ENCODE measurements at regions of chr2 and their contacts with region 1.

Region 1: GRCh38 chr2:55050133-55050994 is at the start of gene RTN4:
- DNase-seq: peak; percentile 99
- ATAC-seq: peak; percentile 89
- H3K4me3 Mint-ChIP-seq: peak within 1 kb of the TSS; percentile 91
- H3K27ac Mint-ChIP-seq: peak within 1 kb of the TSS; percentile 96
- H3K4me1 Mint-ChIP-seq: peaks cover 56% of the 10 kb centered on the region
- H3K27me3 Mint-ChIP-seq: no peaks in the 10 kb centered on the region
- CTCF ChIP-seq: no peak
- total RNA-seq, gene RTN4: 81.5 to 85.0 TPM

Region 2: DNA sequence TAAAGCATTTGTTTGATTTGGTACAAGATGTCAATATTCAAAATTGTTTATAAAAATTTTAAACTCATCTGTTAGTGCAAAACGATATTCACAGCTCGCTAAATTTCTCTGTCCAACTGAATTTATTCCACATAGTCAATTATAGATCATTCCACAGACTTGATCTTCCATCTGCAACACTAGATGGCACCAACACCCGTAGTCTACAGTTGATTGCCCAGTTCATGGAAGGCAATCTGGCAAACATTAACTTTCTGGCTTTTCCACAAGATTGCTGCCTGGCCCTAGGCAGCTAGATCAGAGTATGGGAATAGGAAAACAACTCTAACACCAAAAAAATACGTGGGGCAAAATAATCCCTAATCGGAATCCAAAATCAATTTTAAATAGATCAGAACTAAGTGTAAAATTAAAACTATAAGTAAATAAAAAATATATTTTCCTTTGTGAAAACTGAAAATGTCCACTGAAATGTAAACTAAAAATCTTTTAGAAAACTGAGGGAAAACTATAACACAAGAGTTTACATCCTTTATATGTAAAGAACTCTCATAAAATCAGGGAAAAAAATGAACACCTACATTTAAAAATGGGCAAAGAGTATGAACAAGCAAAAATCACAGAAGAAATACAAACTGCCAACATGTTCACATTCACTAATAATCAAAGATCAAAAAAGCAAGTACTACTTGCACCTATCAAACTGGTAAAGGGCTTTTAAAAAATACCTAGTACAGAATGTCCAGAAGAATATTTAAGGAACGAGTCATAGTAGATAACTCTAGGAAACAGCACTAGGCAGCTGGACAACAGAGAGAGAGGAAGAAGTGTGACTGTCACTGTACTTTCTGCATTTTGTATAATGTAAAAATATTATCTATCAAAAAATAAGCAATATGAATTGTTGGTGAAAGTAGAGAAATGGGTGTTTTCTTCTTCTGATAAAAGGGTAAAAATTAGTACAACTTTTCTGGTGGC is 35.1 kb before region 1 on chr2:
- CTCF ChIA-PET with region 1: interaction called, 14 read pairs
- POLR2A ChIA-PET with region 1: no interaction called
- intact Hi-C with region 1: no loop called
- DNase-seq: peak; percentile 44
- ATAC-seq: no peak
- H3K4me3 Mint-ChIP-seq: no peak overlapping the region
- H3K27ac Mint-ChIP-seq: no peak overlapping the region
- H3K4me1 Mint-ChIP-seq: peaks cover 36% of the 10 kb centered on the region
- H3K27me3 Mint-ChIP-seq: no peaks in the 10 kb centered on the region
- CTCF ChIP-seq: peak; percentile 72

Region 3: GRCh38 chr2:55038428-55038827 is 11.9 kb before region 1 on chr2:
- CTCF ChIA-PET with region 1: interaction called, 10 read pairs
- POLR2A ChIA-PET with region 1: interaction called, 8 read pairs
- intact Hi-C with region 1: no loop called
- DNase-seq: no peak
- ATAC-seq: no peak
- H3K4me3 Mint-ChIP-seq: no peak overlapping the region
- H3K27ac Mint-ChIP-seq: no peak overlapping the region
- H3K4me1 Mint-ChIP-seq: peaks cover 57% of the 10 kb centered on the region
- H3K27me3 Mint-ChIP-seq: no peaks in the 10 kb centered on the region
- CTCF ChIP-seq: no peak

Region 4: GRCh38 chr2:55175254-55176025 is 125.1 kb after region 1 on chr2:
- CTCF ChIA-PET with region 1: interaction called, 10 read pairs
- POLR2A ChIA-PET with region 1: no interaction called
- intact Hi-C with region 1: no loop called
- DNase-seq: no peak
- ATAC-seq: peak; percentile 88
- H3K4me3 Mint-ChIP-seq: no peak overlapping the region
- H3K27ac Mint-ChIP-seq: no peak overlapping the region
- H3K4me1 Mint-ChIP-seq: peaks cover 8% of the 10 kb centered on the region
- H3K27me3 Mint-ChIP-seq: no peaks in the 10 kb centered on the region
- CTCF ChIP-seq: peak; percentile 71

Region 5: GRCh38 chr2:55419679-55420438 is 369.5 kb after region 1 on chr2 and contains the start of gene CCDC88A:
- CTCF ChIA-PET with region 1: interaction called, 3 read pairs
- POLR2A ChIA-PET with region 1: no interaction called
- intact Hi-C with region 1: loop called (anchors 5 kb)
- DNase-seq: peak; percentile 87
- ATAC-seq: peak; percentile 92
- H3K4me3 Mint-ChIP-seq: peak within 1 kb of the TSS; percentile 92
- H3K27ac Mint-ChIP-seq: peak within 1 kb of the TSS; percentile 73
- H3K4me1 Mint-ChIP-seq: peaks cover 28% of the 10 kb centered on the region
- H3K27me3 Mint-ChIP-seq: no peaks in the 10 kb centered on the region
- CTCF ChIP-seq: no peak
- total RNA-seq, gene CCDC88A: 14.8 to 15.8 TPM